Posterior vena cava (tissue), 2 donors: ENCODE measurements at regions of chr10 and their contacts with region 1.

Region 1: GRCh38 chr10:113521123-113521795 is 31.6 kb upstream of the HABP2 start:
- DNase-seq: no peak

Region 2: DNA sequence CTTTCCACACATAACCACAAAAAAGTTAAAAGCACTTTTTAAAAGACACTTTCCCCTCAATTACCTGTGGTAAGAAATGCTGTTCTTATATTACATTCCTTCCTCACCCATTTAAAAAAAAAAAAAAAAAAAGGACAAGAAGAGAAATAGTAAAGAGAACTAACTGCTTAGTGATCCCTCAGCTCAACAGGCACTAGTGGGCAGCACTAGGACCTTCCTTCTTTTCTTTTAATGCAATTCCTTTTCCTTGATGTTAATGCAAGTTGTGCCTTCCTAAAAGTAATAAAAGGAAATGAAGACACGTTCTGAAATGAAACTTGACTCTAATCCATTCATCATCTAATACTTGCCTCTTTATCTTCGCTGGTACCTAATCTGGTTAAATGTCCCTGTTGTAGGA is 381.6 kb before region 1 on chr10:
- intact Hi-C with region 1: loop called in 1 of 2 experiments (anchors 10 kb)
- DNase-seq: no peak

Region 3: GRCh38 chr10:113385021-113385999 is 135.9 kb before region 1 on chr10:
- intact Hi-C with region 1: loop called in 1 of 2 experiments (anchors 10 kb)
- DNase-seq: peak; percentile 95

Region 4: DNA sequence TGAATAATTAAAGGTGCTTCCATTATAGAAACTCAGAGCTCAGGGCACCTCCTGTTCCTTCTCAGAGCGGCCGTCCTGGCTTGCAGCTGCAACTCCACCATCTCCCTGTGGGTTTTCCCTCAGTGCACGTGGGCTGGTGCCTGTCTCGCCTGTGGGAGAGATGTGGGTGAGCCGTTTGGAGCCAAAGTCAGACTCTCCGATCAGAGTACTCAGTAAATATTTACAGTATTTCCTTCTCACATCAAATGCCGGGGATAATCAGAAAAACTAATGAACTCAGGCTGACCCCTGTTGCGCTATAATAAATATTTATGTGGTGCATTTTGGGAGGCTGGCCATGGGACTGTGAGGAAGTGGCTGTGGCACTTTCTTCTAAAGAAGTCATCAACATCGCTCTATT is 124.2 kb before region 1 on chr10:
- intact Hi-C with region 1: loop called in 1 of 2 experiments (anchors 1 kb)
- DNase-seq: no peak

Region 5: DNA sequence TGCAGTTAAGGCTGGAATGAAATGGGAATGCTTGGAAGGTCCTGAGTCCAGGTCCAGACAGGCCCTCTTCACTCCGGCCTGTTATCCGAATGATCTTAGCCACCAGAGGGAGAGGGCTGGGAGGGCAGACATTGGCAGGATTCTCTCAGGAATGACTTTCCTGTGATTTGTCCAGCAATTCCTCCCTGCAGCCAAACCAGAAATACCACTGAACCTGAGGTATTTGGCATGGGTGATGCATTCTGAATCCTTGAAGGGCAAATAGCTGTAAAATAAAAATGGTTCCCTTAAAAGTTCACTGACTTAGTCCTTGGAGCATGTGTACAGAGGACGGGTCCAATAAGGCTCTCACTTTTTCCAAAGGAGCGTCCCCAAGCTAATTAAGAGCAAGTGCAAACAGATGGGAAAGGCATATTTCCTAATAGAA is 45.9 kb before region 1 on chr10:
- intact Hi-C with region 1: loop called (anchors 2 to 10 kb)
- DNase-seq: no peak